ENCODE measurements at regions of chr4 and their contacts with region 1.

Region 1: GRCh38 chr4:140252742-140253555 is 99.0 kb upstream of the MAML3 start:
- DNase-seq: peak; percentile 71 to 88 (median 76)
- ATAC-seq: peak; percentile 56 to 94 (median 88)
- H3K4me3 ChIP-seq: peak overlapping the region; percentile 47 to 93 (median 66)
- H3K27ac ChIP-seq: peak overlapping the region; percentile 78 to 95 (median 90)
- H3K4me1 ChIP-seq: peaks cover 0 to 33% (median 12%) of the 10 kb centered on the region in 12 donors
- H3K27me3 ChIP-seq: no peaks in the 10 kb centered on the region
- CTCF ChIP-seq: peak; percentile 85 to 99 (median 97)
- POLR2A ChIP-seq: no peak

Region 2: DNA sequence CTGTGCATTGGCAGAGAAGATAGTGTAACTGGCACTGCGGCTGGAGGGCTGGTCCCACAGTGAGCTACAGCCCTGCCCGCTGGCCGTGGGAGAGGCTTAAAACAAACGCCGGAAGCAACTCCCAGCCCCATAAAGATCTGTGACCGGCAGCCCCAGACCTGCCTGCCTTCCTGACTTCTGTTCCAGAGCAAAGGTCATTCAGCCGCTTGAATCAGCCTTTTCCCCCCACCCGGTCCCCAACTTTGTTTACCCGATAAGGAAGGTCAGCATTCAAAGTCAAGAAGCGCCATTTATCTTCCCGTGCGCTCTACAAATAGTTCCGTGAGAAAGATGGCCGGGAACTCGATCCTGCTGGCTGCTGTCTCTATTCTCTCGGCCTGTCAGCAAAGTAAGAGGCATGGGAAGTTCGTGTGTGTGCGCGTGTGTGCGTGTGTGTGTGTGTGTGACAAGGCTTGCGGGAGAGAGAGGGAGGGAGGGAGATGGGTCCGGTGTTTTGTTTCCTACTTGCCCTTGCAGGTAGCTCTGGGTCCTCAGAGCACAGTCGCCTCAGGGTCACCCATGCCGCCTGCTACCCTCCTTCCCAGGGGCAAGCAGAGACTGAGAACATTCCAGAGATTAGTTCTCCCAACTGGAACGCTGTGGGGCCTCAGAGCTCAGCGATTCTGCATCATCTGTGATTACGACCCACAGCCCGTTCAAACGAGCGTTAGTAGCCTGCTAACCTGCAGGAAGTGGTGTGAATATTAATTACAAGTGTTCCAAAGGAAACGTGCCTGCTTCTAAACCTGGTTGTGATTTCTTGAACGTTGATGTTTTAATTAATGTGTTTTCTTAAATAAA is 587.0 kb before region 1 on chr4 and contains the start of gene MGST2:
- intact Hi-C with region 1: loop called in 2 of 10 experiments (anchors 10 kb)
- DNase-seq: peak; percentile 83 to 90 (median 89)
- ATAC-seq: peak; percentile 92 to 94 (median 93)
- H3K4me3 ChIP-seq: peak within 1 kb of the TSS; percentile 49 to 79 (median 58)
- H3K27ac ChIP-seq: peak within 1 kb of the TSS; percentile 76 to 95 (median 93)
- H3K4me1 ChIP-seq: peaks cover 3 to 61% (median 27%) of the 10 kb centered on the region in 12 donors
- H3K27me3 ChIP-seq: no peaks in the 10 kb centered on the region
- CTCF ChIP-seq: peak in 1 of 12 donors; percentile 7
- POLR2A ChIP-seq: peak in 1 of 2 donors; percentile 44
- total RNA-seq, gene MGST2: 94.7 to 122 (median 105) TPM

Region 3: GRCh38 chr4:139875411-139875825 is 377.5 kb before region 1 on chr4:
- intact Hi-C with region 1: loop called in 2 of 10 experiments (anchors 5 to 10 kb)
- DNase-seq: no peak
- ATAC-seq: no peak
- H3K4me3 ChIP-seq: no peak overlapping the region
- H3K27ac ChIP-seq: no peak overlapping the region
- H3K4me1 ChIP-seq: peaks cover 0 to 29% (median 6%) of the 10 kb centered on the region in 12 donors
- H3K27me3 ChIP-seq: no peaks in the 10 kb centered on the region
- CTCF ChIP-seq: no peak
- POLR2A ChIP-seq: no peak

Region 4: DNA sequence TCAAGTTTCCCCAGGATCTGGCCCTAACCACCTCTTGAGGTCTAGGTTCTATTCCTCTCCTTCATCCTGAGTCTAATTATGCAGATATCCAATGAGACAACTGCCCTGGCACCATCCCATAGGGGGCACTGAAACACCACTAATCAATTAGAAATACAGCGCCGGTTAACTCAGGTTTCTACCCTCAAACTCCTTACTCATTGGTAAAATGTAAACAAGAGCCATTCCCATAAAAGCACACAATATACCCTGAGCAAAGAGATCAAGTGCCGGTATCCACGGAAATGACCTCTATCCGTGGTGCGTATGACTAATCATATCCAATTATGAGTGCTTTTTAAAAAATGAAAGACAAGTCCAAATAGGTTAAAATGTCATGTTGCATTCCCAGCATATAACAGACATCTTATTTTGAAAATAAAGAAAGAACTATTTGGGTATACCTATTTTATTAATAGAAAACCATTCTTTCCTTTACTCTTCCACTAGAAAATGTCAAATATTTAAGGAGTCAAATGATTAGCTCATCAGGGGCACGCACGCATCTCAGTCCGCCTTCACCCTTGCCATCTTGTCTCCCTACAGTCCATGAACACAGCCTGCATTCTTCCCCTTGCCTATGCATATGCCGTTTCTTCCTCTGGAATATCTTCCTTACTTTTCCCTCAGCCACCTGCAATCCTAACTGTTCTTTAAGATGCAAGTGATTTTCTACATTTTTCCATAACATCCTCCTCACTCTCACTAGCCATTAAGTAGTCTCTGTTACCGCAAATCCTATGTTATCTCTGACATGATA is 240.1 kb before region 1 on chr4:
- intact Hi-C with region 1: loop called in 9 of 10 experiments (anchors 2 to 10 kb)
- DNase-seq: peak in 4 of 5 donors; percentile 40 to 64 (median 57)
- ATAC-seq: peak; percentile 71 to 90 (median 88)
- H3K4me3 ChIP-seq: peak overlapping the region in 1 of 12 donors; percentile 22
- H3K27ac ChIP-seq: no peak overlapping the region
- H3K4me1 ChIP-seq: peaks cover 0 to 10% (median 0%) of the 10 kb centered on the region in 12 donors
- H3K27me3 ChIP-seq: no peaks in the 10 kb centered on the region
- CTCF ChIP-seq: peak; percentile 27 to 71 (median 54)
- POLR2A ChIP-seq: no peak

Region 5: DNA sequence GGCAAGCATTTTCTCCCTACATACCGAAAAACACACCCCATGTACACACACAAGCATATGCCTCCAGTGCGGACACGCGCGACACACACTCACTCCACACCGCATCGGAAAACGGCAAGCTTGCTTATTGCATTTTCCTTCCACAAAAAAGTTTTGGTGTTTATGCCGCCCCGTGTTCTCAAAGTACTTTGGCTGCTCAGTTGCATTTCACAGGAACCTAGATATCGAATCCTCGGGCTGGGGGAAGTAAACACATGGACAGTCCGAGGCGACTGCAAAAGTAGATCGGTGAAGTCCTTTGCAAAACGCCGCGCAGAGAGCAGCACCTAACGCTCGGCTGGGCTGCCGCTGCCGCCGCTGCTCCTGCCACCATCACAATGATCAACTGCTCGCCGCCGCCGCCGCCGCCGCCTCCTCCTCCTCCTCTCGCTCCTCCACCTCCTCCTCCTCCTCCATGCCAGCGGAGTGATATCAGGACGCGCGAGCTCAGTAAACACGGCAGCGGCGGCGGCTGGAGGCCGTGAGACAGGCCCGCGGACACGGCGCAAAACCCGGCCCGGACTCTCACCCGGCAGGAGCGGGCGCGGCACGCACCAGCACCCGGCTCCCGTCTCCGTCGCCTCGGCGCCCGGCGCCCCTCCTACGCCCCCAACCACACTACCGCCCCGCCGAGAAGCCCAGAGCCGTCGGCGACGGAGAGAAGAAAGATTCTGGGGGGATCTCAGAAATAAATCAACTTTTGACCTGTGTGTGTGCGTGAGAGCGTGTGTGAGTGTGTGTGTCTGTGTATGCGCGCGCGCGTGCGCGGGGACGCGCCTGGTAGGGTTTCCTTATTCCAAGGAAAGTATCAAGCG is 99.0 kb before region 1 on chr4 and contains the start of gene MAML3:
- intact Hi-C with region 1: loop called (anchors 1 to 5 kb)
- DNase-seq: peak; percentile 95 to 98 (median 97)
- ATAC-seq: peak; percentile 63 to 79 (median 74)
- H3K4me3 ChIP-seq: peak within 1 kb of the TSS; percentile 35 to 92 (median 83)
- H3K27ac ChIP-seq: peak within 1 kb of the TSS; percentile 83 to 100 (median 98)
- H3K4me1 ChIP-seq: peaks cover 0 to 21% (median 9%) of the 10 kb centered on the region in 12 donors
- H3K27me3 ChIP-seq: no peaks in the 10 kb centered on the region
- CTCF ChIP-seq: no peak
- POLR2A ChIP-seq: peak in 1 of 2 donors; percentile 86
- total RNA-seq, gene MAML3: 1.7 to 5.9 (median 3.1) TPM

Region 6: DNA sequence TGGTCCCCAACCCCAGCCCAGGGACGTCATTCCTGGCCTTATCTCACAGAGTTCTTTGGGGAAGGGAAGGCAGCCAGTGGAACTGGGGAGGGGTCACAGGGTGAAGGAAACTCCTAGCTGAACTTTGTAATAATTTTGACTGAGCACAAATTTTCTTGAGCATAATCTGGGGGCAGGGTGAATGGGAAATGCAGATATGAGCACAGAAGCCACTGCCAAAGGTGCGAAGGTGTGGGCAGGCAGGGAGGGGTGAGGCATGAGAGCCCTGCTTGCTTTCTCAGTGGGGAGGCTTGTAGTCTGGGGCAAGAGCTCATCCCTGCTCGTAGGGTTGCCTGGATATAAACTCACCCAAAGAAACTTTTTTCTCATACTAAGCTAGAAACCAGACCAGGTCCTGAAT is 210.2 kb after region 1 on chr4:
- intact Hi-C with region 1: no loop called
- DNase-seq: no peak
- ATAC-seq: no peak
- H3K4me3 ChIP-seq: no peak overlapping the region
- H3K27ac ChIP-seq: no peak overlapping the region
- H3K4me1 ChIP-seq: no peaks in the 10 kb centered on the region
- H3K27me3 ChIP-seq: peaks cover 0 to 3% (median 0%) of the 10 kb centered on the region in 9 donors
- CTCF ChIP-seq: no peak
- POLR2A ChIP-seq: no peak